ENCODE measurements at regions of chr1 and their contacts with region 1.

Region 1: DNA sequence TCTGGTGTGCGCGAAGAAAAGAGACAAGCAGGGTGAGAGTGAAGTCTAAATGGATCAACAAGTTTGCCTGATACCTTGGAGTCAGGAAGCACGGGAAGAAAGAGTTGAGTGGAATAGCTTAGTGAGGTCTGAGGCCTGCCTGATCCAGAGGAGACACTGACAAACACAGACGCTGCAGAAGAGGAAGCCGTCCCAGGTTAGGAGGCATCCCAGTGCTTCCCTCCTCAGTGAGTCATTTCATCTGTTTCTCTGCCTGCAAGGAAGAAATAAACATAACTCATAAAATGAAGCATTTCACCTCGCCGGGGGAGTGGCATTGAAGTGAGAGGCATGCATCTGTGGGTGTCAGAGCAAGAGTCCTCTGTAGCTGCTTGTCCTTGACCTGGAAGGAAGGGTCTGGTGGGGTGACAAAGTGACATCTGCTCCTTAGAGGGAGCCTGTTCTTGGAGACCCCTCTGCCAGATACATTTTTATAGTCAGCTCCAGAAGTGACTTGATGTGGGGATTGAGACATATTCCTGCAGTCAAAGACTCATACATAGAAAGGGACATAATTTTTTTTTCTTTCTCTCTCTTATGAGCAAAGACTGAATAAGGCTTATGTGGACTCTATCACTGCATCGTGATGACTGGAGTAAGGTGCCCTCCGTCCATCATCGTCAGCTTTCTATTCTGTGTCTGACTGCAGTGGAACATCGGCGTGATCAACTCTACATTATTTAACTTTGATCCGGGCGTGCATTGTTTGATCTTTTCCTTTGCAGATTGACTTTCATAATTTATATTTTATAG is 256.7 kb downstream of the KIF26B start:
- DNase-seq: no peak
- ATAC-seq: no peak
- H3K4me3 ChIP-seq: no peak overlapping the region
- H3K27ac ChIP-seq: no peak overlapping the region
- H3K4me1 ChIP-seq: no peaks in the 10 kb centered on the region
- H3K27me3 ChIP-seq: no peaks in the 10 kb centered on the region
- CTCF ChIP-seq: no peak
- POLR2A ChIP-seq: no peak

Region 2: GRCh38 chr1:245475154-245475553 is 63.7 kb after region 1 on chr1:
- intact Hi-C with region 1: loop called in 1 of 10 experiments (anchors 10 kb)
- DNase-seq: no peak
- ATAC-seq: no peak
- H3K4me3 ChIP-seq: no peak overlapping the region
- H3K27ac ChIP-seq: no peak overlapping the region
- H3K4me1 ChIP-seq: no peaks in the 10 kb centered on the region
- H3K27me3 ChIP-seq: no peaks in the 10 kb centered on the region
- CTCF ChIP-seq: no peak
- POLR2A ChIP-seq: no peak

Region 3: DNA sequence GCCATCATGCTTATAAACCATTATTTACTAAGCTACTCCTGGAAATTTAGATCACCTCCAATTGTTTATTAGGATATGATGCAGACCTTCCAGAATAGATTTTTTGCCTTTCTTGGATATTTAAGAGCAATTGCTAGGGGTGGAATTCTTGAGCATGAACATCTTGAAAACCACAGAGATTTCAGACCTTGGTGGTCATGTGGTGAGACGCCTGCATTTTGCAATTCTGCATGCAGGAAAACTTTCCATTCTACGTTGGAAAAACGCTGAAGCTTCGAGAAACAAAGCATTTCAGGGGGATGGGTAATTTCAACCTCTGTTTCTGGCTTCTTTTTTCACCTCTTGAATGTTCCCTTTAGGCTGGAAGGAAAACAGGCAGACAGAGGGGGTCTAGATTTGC is 339.7 kb after region 1 on chr1:
- intact Hi-C with region 1: loop called in 1 of 10 experiments (anchors 10 kb)
- DNase-seq: no peak
- ATAC-seq: no peak
- H3K4me3 ChIP-seq: no peak overlapping the region
- H3K27ac ChIP-seq: no peak overlapping the region
- H3K4me1 ChIP-seq: no peaks in the 10 kb centered on the region
- H3K27me3 ChIP-seq: no peaks in the 10 kb centered on the region
- CTCF ChIP-seq: no peak
- POLR2A ChIP-seq: no peak